HEK293 (cell line): ENCODE measurements at regions of chr7 and their contacts with region 1.

Region 1: GRCh38 chr7:102279537-102280400 is 6.9 kb upstream of the SH2B2 start:
- H3K4me3 ChIP-seq: no peak overlapping the region
- H3K27ac ChIP-seq: no peak overlapping the region
- H3K4me1 ChIP-seq: no peaks in the 10 kb centered on the region
- CTCF ChIP-seq: peak; percentile 92

Region 2: DNA sequence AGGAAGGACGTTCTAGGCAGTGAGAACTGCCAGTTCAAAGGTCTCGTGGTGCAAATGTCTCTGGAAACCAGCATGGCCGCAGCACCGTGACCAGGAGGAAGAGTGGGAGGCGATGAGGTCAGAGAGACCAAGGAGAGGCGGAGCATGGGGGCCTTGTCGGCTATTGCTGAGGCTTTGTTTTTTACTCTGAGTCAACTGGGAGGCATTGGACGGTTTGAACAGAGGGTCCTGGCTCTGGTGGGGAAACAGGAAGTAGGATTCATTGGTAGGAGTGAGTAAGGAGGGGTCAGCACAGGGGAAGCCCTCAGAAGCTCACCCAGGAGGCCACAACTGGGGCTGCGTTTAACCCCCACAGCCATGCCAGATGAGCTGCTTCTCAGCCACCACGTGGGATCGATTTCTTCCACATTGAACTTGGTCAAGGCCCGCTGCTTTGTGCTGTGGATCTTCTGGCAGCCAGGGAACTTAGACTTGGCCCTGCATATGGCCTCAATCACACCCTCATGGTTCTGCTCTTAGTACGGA is 15.3 kb before region 1 on chr7:
- CTCF ChIA-PET with region 1: no interaction called
- POLR2A ChIA-PET with region 1: no interaction called
- H3K4me3 ChIP-seq: no peak overlapping the region
- H3K27ac ChIP-seq: no peak overlapping the region
- H3K4me1 ChIP-seq: no peaks in the 10 kb centered on the region
- CTCF ChIP-seq: no peak

Region 3: DNA sequence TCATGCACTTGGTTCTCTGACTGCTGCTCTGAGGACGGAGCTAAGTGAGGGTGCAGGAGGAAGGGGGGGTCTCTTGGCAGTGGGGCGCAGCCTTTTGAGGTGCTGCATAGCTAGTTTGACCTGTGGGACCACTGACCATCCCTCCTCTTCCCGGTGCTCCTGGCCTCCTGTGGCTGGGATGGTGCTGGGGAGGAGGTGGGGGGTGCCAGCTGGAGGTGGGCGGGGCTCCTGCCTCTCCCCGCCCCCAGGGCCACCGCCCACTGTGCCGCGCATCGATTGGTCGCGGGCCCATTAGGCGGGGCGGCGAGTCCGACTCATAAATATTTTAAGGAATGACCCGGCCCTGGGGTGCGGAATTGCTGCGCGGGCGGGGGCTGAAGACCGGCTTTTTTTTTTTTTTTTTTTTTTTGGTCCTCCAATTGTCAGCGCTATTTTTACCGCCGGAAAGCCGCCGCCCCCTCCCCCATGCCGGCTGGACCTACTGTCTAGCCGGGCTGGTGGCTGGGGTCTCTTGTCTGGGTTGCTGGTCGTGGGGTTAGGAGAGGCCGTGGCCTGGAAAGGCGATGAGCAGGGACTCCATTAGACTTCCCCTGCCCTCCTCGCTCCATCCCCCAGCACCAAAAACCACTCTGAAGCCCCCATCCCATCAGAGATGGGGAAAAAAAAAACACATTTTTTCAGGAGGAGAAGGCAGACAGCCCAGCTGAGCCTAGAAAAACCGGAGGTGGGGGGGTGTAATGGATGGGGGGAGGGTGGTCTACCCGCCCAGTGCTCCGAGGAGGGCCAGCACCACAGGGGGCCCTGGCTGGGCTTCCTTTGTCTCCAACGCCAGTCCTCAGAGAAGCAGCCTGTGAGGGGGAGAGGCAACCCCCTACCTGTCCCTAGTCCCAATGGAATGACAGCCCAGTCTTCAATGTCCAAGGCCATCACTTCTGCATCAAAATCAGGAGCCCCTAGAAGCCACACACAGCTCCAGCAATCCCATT is 13.3 kb after region 1 on chr7:
- CTCF ChIA-PET with region 1: no interaction called
- POLR2A ChIA-PET with region 1: no interaction called
- H3K4me3 ChIP-seq: no peak overlapping the region
- H3K27ac ChIP-seq: no peak overlapping the region
- H3K4me1 ChIP-seq: no peaks in the 10 kb centered on the region
- CTCF ChIP-seq: no peak

Region 4: GRCh38 chr7:102390697-102391484 is 111.1 kb after region 1 on chr7:
- CTCF ChIA-PET with region 1: interaction called, 89 read pairs
- POLR2A ChIA-PET with region 1: interaction called, 4 read pairs
- H3K4me3 ChIP-seq: no peak overlapping the region
- H3K27ac ChIP-seq: no peak overlapping the region
- H3K4me1 ChIP-seq: no peaks in the 10 kb centered on the region
- CTCF ChIP-seq: peak; percentile 92